Psoas muscle (tissue), 8 donors: ENCODE measurements at regions of chr1 and their contacts with region 1.

Region 1: DNA sequence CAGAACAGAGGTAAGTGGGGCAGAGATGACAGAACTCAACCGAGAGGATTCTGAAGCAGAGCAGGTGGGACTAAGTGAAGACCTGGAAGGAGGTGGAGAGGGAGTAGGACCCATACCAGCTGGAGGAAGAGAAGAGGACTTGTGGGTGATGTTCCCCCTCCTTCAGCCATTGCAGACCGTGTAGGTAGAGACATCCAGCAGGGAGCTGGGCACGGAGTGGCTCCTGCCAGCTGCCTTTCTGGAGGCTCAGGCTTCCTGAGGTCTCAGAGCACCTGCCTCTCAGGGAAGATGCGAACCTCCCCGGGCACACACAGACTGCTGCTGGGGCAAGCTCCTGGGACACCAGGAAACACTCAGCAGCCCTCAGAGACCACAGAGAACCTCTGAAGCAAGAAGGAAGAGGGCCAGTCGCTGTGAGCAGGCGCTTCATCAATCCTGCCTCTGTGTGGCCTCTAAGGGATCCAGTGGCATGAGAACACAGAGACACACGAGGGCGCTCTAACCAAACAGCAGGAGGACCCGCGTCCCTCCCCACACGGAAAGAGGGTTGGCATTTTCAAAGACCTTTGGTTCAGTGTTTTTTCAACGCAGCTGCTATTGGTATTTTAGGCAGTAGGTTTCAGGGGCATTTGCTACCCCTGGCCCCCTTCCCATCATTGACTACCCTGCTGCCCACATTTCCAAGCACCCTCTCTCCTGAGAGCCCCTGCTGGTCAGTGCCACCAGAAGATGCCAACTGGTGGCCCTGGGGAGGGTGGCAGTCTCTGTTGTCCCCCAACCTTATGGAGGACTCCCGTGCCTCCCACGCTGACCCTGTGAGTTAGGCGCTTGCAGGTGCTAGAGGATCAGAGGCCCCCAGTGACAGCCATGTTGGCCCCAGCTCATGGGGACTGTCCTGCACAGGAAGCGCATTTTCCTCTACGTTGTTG is 89.6 kb upstream of the EDN2 start:
- DNase-seq: peak; percentile 75 to 85
- ATAC-seq: peak; percentile 88 to 96 (median 90)
- H3K4me3 ChIP-seq: no peak overlapping the region
- H3K27ac ChIP-seq: no peak overlapping the region
- H3K4me1 ChIP-seq: no peaks in the 10 kb centered on the region
- H3K27me3 ChIP-seq: no peaks in the 10 kb centered on the region
- CTCF ChIP-seq: peak; percentile 89

Region 2: GRCh38 chr1:41516168-41517061 is 57.6 kb before region 1 on chr1:
- intact Hi-C with region 1: loop called in 1 of 2 experiments (anchors 5 kb)
- DNase-seq: peak; percentile 91 to 95
- ATAC-seq: peak; percentile 96 to 98 (median 96)
- H3K4me3 ChIP-seq: peak overlapping the region; percentile 70
- H3K27ac ChIP-seq: peak overlapping the region; percentile 66
- H3K4me1 ChIP-seq: peaks cover 25% of the 10 kb centered on the region
- H3K27me3 ChIP-seq: no peaks in the 10 kb centered on the region
- CTCF ChIP-seq: peak; percentile 88

Region 3: DNA sequence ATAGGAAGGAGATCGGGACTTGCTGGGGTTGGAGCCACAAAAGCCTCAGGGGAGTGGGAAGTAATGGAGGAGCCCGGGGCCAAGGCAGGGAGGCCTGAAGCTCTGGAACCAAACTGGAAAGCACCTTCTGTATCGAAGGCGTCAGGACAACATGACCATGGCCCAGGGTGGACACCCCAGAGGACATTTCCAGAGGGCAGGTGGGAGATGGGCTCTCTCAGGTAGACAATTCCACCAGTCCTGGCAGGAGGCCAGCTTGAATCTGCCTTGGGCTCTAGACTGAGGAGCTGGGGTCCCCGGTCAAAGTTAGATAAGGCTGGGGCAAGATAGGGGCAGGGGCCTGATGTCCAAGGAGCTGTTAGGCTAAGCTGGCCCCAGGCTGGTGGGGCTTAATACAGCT is 15.3 kb after region 1 on chr1:
- intact Hi-C with region 1: no loop called
- DNase-seq: no peak
- ATAC-seq: no peak
- H3K4me3 ChIP-seq: no peak overlapping the region
- H3K27ac ChIP-seq: no peak overlapping the region
- H3K4me1 ChIP-seq: no peaks in the 10 kb centered on the region
- H3K27me3 ChIP-seq: no peaks in the 10 kb centered on the region
- CTCF ChIP-seq: no peak

Region 4: GRCh38 chr1:41795205-41795762 is 221.2 kb after region 1 on chr1:
- intact Hi-C with region 1: loop called (anchors 1 to 5 kb)
- DNase-seq: no peak
- ATAC-seq: peak in 3 of 4 donors; percentile 58 to 79 (median 77)
- H3K4me3 ChIP-seq: no peak overlapping the region
- H3K27ac ChIP-seq: no peak overlapping the region
- H3K4me1 ChIP-seq: peaks cover 4% of the 10 kb centered on the region
- H3K27me3 ChIP-seq: no peaks in the 10 kb centered on the region
- CTCF ChIP-seq: peak; percentile 46